Panc1 (cell line): ENCODE measurements at regions of chr15 and their contacts with region 1.

Region 1: GRCh38 chr15:44711356-44712107 is at the start of gene B2M:
- DNase-seq: peak; percentile 94
- ATAC-seq: peak; percentile 96
- H3K4me3 ChIP-seq: peak within 1 kb of the TSS; percentile 76 to 99
- H3K27ac ChIP-seq: peak within 1 kb of the TSS; percentile 94
- H3K4me1 ChIP-seq: peaks cover 23% of the 10 kb centered on the region
- H3K27me3 ChIP-seq: no peaks in the 10 kb centered on the region
- CTCF ChIP-seq: no peak
- total RNA-seq, gene B2M: 914 TPM

Region 2: DNA sequence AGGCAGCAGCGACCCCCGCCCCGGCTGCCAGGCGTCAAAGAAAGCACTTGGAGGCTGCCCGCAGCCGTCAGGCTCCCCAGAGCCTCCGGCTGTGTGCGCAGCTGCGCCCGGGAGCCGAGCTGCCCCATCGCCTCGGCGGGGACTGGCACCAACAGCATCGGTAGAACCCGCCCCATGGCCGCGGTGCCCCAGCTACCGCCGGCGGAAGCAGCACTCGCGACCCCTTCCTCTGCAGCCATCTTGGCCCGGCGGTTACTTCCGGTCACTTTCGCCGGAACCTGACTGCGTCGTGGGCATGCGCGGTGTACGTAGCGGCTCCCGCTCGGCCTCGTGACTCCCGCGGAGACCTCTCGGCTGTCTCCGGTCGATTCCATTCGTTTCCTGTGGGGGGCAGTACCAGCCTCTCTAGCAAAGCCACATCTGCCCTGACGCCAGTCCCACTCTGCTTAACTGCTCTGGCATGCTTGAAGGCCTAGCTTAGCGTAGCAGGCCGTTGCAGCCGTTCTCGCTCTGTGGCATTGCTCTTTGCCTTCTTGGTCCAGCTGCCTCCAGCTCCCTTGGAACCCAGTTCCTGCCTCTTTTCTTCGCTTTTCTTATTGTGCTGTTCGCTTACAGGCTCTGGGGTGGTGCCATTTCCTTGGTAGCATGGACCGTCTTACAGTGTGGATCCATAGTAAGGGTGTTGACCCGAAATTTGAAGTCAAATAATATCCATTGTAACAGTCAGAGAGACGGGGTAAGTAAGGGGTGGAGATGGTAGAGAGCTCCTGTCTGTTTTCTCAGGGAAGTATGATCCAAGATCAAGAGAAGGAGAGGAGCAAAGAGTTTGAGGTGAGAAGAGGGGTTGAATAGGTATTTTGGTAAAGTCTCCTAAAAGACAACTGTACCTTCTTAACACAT is 47.9 kb before region 1 on chr15 and contains the start of gene SPG11:
- CTCF ChIA-PET with region 1: interaction called, 6 read pairs
- POLR2A ChIA-PET with region 1: interaction called, 11 read pairs
- in situ Hi-C with region 1: no loop called
- intact Hi-C with region 1: no loop called
- DNase-seq: peak; percentile 91
- ATAC-seq: peak; percentile 98
- H3K4me3 ChIP-seq: peak within 1 kb of the TSS; percentile 81 to 97
- H3K27ac ChIP-seq: peak within 1 kb of the TSS; percentile 98
- H3K4me1 ChIP-seq: peaks cover 15% of the 10 kb centered on the region
- H3K27me3 ChIP-seq: no peaks in the 10 kb centered on the region
- CTCF ChIP-seq: peak; percentile 94
- total RNA-seq, gene SPG11: 55.0 TPM

Region 3: DNA sequence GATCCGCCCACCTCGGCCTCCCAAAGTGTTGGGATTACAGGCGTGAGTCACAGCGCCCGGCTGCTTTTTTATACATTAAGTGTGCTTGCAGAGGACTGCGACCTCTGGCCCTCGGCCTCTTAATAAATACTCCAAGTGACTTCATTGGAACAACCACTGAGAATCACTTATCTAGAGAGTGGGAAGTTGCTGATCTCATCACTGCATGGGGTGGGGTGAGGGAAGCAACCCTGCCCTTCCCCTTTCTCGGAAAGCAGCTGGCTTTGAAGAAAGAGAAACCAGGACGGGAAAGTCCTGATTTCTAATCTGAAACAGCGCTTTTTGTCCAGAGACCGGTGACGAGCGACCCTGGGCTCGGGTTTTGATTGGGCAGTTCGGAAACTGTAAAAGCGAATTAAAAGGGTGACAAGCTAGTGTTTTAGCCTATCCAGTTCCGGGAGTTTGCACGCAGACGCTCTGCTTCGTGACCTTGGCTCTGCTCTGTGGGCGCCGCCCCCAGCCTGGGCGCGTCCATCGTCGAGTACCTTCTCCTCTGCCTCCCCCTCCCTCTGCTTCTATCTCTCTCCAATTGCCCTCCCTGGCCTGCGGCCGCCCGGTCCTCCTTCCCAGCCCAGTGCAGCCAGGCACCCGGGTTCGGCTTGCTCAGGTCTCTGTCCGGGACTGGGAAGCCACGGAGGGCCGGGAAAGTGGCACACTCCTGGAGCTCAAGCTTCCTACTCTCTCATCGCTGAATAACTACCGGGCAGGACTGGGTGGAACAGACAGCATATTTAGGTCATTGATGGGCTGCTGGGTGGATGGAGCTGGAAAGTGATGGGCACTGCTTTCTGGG is 17.3 kb after region 1 on chr15:
- CTCF ChIA-PET with region 1: interaction called, 9 read pairs
- POLR2A ChIA-PET with region 1: interaction called, 28 read pairs
- in situ Hi-C with region 1: no loop called
- intact Hi-C with region 1: no loop called
- DNase-seq: peak; percentile 98
- ATAC-seq: peak; percentile 92
- H3K4me3 ChIP-seq: peak overlapping the region; percentile 91 to 96
- H3K27ac ChIP-seq: peak overlapping the region; percentile 99
- H3K4me1 ChIP-seq: peaks cover 43% of the 10 kb centered on the region
- H3K27me3 ChIP-seq: no peaks in the 10 kb centered on the region
- CTCF ChIP-seq: no peak

Region 4: DNA sequence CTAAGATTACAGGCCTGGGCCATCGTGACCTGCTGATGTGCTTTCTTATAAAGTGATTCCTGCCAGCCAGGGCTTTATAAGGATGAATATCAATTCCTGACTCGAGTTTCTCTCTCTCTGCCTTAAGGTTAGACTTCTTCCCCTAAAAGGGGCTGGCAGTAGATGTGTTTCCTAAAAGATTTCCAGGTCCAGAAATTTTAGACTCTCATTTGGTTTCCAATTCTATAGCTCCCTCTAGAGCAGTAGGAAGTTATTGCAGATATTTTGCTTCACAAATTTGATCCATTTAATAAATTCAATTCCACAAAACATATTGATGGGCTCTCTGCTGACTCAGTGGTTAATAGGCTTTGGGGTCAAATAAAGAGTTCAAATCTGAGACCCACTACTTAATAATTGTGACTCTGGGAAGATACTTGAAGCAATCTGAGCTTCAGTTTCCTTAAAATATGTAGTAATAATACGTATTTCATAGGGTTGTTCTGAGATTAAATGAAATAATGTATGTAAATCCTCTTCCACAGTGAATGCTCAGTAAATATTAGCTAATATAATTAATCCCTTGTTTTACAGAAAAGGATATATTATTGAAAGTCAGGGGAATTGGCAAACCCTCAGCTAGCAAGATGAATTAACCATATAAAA is 26.9 kb after region 1 on chr15:
- CTCF ChIA-PET with region 1: interaction called, 44 read pairs
- POLR2A ChIA-PET with region 1: interaction called, 7 read pairs
- in situ Hi-C with region 1: no loop called
- intact Hi-C with region 1: no loop called
- DNase-seq: no peak
- ATAC-seq: no peak
- H3K4me3 ChIP-seq: no peak overlapping the region
- H3K27ac ChIP-seq: no peak overlapping the region
- H3K4me1 ChIP-seq: peaks cover 19% of the 10 kb centered on the region
- H3K27me3 ChIP-seq: no peaks in the 10 kb centered on the region
- CTCF ChIP-seq: peak; percentile 83

Region 5: GRCh38 chr15:44753345-44753744 is 41.8 kb after region 1 on chr15:
- CTCF ChIA-PET with region 1: interaction called, 15 read pairs
- POLR2A ChIA-PET with region 1: no interaction called
- in situ Hi-C with region 1: no loop called
- intact Hi-C with region 1: no loop called
- DNase-seq: no peak
- ATAC-seq: no peak
- H3K4me3 ChIP-seq: no peak overlapping the region
- H3K27ac ChIP-seq: no peak overlapping the region
- H3K4me1 ChIP-seq: no peaks in the 10 kb centered on the region
- H3K27me3 ChIP-seq: no peaks in the 10 kb centered on the region; the same call in 1 of the 2 replicates
- CTCF ChIP-seq: no peak

Region 6: GRCh38 chr15:45166834-45167630 is 455.5 kb after region 1 on chr15:
- CTCF ChIA-PET with region 1: no interaction called
- POLR2A ChIA-PET with region 1: no interaction called
- in situ Hi-C with region 1: no loop called
- intact Hi-C with region 1: no loop called
- DNase-seq: peak; percentile 58
- ATAC-seq: peak; percentile 92
- H3K4me3 ChIP-seq: peak overlapping the region; percentile 67 to 68
- H3K27ac ChIP-seq: peak overlapping the region; percentile 84
- H3K4me1 ChIP-seq: peaks cover 8% of the 10 kb centered on the region
- H3K27me3 ChIP-seq: no peaks in the 10 kb centered on the region
- CTCF ChIP-seq: peak; percentile 85